Naive thymus-derived CD4-positive, alpha-beta T cell (primary cell): ENCODE measurements at regions of chr7 and their contacts with region 1.

Region 1: DNA sequence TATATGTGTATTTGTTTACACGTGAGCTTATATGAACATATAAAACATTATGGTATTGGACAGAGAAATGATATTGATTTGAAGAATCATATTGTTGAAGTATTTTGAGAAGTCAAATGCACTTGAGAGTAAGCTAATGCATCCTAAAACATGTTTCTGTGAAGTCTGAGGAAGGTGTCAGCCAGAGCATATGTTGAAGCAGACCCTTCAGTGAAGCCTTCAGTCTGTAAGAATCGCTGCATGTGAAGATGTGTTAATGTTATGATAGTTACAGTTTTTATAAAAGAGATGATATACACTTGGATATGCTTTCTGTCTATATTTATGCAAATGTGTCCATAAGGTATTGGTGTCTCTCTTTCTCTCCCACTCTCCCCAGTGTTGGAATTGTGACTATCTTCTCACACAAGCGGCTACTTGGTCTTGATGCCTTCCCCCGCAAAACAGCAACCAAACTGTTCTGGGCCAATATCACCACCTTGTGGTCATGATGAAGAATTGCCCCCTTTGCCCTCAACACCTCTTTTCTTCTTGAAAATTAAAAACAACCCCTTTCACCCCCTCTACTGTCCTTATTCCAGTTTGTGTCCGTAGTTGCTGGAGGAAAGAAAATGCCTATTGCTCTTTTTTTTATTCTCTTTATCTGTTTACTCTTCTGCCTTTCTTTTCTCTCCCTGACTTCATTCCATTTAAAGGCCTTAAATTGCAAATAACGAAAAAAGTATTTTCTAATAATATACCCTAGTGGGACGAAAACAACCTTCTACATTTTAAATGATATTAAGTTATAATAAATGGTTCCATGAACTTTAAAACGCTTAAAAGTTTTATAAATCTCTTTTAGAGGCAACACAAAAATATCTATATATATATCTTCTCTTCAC is 64.9 kb downstream of the IKZF1 start:
- DNase-seq: peak in 7 of 9 donors; percentile 72 to 86 (median 81)
- ATAC-seq: peak; percentile 84
- H3K4me3 ChIP-seq: peak overlapping the region; percentile 15
- H3K4me3 Mint-ChIP-seq: peak overlapping the region; percentile 8 to 89 (median 60)
- H3K27ac ChIP-seq: peak overlapping the region; percentile 94
- H3K27ac Mint-ChIP-seq: peak overlapping the region in 6 of 9 donors; percentile 80 to 100 (median 98)
- H3K4me1 ChIP-seq: peaks cover 84 to 96% of the 10 kb centered on the region in 2 donors
- H3K4me1 Mint-ChIP-seq: peaks cover 63 to 99% (median 96%) of the 10 kb centered on the region in 7 donors
- H3K27me3 ChIP-seq: no peaks in the 10 kb centered on the region
- H3K27me3 Mint-ChIP-seq: no peaks in the 10 kb centered on the region

Region 2: GRCh38 chr7:49980465-49980864 is 388.9 kb before region 1 on chr7:
- CTCF ChIA-PET with region 1: no interaction called
- POLR2A ChIA-PET with region 1: no interaction called
- intact Hi-C with region 1: no loop called
- DNase-seq: peak in 1 of 9 donors; percentile 4
- ATAC-seq: no peak
- H3K4me3 ChIP-seq: no peak overlapping the region
- H3K4me3 Mint-ChIP-seq: no peak overlapping the region
- H3K27ac ChIP-seq: no peak overlapping the region
- H3K27ac Mint-ChIP-seq: no peak overlapping the region
- H3K4me1 ChIP-seq: no peaks in the 10 kb centered on the region
- H3K4me1 Mint-ChIP-seq: no peaks in the 10 kb centered on the region
- H3K27me3 ChIP-seq: no peaks in the 10 kb centered on the region
- H3K27me3 Mint-ChIP-seq: peaks cover 0 to 11% (median 0%) of the 10 kb centered on the region in 5 donors

Region 3: DNA sequence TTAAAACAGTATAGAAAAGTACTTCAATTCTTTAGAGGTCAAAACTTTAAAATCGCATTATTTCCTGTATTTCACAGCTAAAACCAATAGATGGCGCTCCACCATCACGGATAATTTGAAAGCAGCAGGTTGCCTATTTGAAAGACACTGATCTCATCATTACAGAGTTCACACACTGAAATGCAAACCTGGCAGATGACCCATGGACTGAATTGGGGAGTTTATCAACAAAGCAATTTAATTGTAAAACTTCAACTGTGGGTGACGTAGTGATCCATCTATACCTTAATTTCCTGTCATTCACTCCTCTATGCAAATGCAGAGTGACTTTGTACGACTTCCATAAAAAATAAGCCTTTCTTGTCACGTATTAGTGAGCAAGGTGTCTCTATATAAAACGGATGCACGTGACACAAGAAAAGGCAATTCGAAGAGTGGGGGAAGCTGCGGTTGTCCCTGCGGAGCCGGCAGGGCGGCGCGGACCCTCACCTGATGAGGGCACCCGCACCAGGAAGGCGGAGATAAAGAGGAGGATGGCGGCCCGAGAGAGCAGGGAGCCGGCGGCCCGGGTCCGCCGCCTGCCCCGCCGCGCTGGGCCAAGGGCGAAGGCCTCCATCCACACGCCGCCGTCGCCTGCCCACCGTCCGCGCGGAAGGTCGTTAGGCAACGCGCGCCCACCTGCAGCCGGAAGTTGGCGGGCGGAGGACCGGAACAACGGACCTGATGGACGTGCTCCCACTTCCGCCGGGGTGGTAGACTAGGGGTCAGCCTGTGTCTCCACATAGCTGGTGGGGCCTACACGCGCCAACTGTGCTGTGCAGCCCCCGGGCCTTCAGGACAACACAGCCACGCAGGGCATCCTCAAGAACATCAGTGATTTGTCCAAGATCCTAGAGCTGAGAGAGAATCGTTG is 276.6 kb before region 1 on chr7 and contains the start of gene ZPBP:
- CTCF ChIA-PET with region 1: interaction called, 4 read pairs
- POLR2A ChIA-PET with region 1: interaction called, 3 read pairs
- intact Hi-C with region 1: loop called (anchors 2 kb)
- DNase-seq: peak in 8 of 9 donors; percentile 34 to 77 (median 70)
- ATAC-seq: peak; percentile 88
- H3K4me3 ChIP-seq: peak within 1 kb of the TSS; percentile 59
- H3K4me3 Mint-ChIP-seq: peak within 1 kb of the TSS; percentile 85 to 96 (median 89)
- H3K27ac ChIP-seq: peak within 1 kb of the TSS; percentile 62
- H3K27ac Mint-ChIP-seq: peak within 1 kb of the TSS; percentile 62 to 93 (median 88)
- H3K4me1 ChIP-seq: no peaks in the 10 kb centered on the region
- H3K4me1 Mint-ChIP-seq: peaks cover 8 to 22% (median 10%) of the 10 kb centered on the region in 7 donors
- H3K27me3 ChIP-seq: no peaks in the 10 kb centered on the region
- H3K27me3 Mint-ChIP-seq: peaks cover 0 to 27% (median 0%) of the 10 kb centered on the region in 5 donors
- total RNA-seq, gene ZPBP: not detected

Region 4: GRCh38 chr7:50212666-50213621 is 156.4 kb before region 1 on chr7:
- CTCF ChIA-PET with region 1: interaction called, 181 read pairs
- POLR2A ChIA-PET with region 1: interaction called, 325 read pairs
- intact Hi-C with region 1: no loop called
- DNase-seq: peak in 5 of 9 donors; percentile 24 to 49 (median 41)
- ATAC-seq: peak; percentile 63
- H3K4me3 ChIP-seq: no peak overlapping the region
- H3K4me3 Mint-ChIP-seq: peak overlapping the region; percentile 44 to 89 (median 68)
- H3K27ac ChIP-seq: no peak overlapping the region
- H3K27ac Mint-ChIP-seq: peak overlapping the region; percentile 26 to 94 (median 83)
- H3K4me1 ChIP-seq: peaks cover 17 to 86% of the 10 kb centered on the region in 2 donors
- H3K4me1 Mint-ChIP-seq: peaks cover 69 to 100% (median 98%) of the 10 kb centered on the region in 7 donors
- H3K27me3 ChIP-seq: no peaks in the 10 kb centered on the region
- H3K27me3 Mint-ChIP-seq: no peaks in the 10 kb centered on the region

Region 5: GRCh38 chr7:50317221-50317678 is 52.1 kb before region 1 on chr7:
- CTCF ChIA-PET with region 1: interaction called, 210 read pairs
- POLR2A ChIA-PET with region 1: interaction called, 2,368 read pairs
- intact Hi-C with region 1: loop called (anchors 1 to 2 kb)
- DNase-seq: peak in 7 of 9 donors; percentile 71 to 92 (median 89)
- ATAC-seq: peak; percentile 85
- H3K4me3 ChIP-seq: peak overlapping the region; percentile 73
- H3K4me3 Mint-ChIP-seq: peak overlapping the region; percentile 81 to 100 (median 94)
- H3K27ac ChIP-seq: peak overlapping the region; percentile 90
- H3K27ac Mint-ChIP-seq: peak overlapping the region in 6 of 9 donors; percentile 90 to 100 (median 99)
- H3K4me1 ChIP-seq: peaks cover 78 to 92% of the 10 kb centered on the region in 2 donors
- H3K4me1 Mint-ChIP-seq: peaks cover 0 to 100% (median 95%) of the 10 kb centered on the region in 7 donors
- H3K27me3 ChIP-seq: no peaks in the 10 kb centered on the region
- H3K27me3 Mint-ChIP-seq: no peaks in the 10 kb centered on the region

Region 6: DNA sequence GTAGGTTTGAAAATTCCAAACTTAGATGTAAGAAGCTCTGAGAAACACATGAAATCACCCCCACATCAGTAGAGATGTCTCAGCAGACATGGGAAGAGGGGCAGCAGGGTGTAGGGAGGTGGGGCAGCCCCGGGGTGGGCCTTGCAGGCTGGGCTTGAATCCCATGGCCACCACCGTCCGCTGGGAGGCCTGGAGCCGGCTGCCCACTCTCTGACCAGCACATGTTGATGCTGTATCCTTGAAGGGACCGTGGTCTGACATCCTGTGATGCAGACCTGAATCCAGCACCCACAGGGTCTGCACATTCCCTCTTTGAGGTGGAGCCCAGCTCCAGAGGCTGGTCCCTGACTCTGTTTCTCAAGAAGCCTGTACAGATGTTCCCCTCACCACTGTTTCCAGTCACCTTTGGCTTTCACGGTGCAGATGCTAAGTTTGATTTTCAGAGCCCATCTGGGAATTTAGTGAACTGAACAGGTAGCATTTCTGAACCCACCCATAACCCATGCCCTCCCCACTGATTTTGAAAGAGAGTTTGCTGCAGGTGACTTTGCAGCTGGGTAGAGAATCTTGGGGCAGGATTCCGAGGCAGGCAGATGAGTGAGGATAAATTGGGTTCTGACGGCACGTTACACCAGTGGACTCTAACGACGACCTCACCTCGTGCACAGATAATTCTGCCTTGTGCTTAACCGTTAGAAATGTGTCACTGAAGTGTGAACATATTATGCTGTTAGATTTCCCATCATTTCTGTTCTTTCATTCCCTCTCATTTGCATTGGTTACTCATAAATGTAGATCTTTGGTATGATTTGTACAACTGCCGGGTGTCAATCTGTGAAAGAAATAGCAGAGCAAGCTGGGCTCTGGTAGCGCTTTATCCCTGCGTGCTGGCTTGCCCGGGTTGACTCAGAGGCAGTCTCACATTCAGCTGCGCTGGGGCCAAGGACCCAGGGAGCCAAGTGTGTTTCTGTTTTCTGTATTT is 19.1 kb before region 1 on chr7:
- CTCF ChIA-PET with region 1: interaction called, 16 read pairs
- POLR2A ChIA-PET with region 1: interaction called, 1,292 read pairs
- intact Hi-C with region 1: loop called in 1 of 2 experiments (anchors 1 kb)
- DNase-seq: peak in 5 of 9 donors; percentile 55 to 77 (median 68)
- ATAC-seq: peak; percentile 51
- H3K4me3 ChIP-seq: peak overlapping the region; percentile 4
- H3K4me3 Mint-ChIP-seq: peak overlapping the region; percentile 71 to 95 (median 78)
- H3K27ac ChIP-seq: peak overlapping the region; percentile 93
- H3K27ac Mint-ChIP-seq: peak overlapping the region in 6 of 9 donors; percentile 91 to 100 (median 100)
- H3K4me1 ChIP-seq: peaks cover 96% of the 10 kb centered on the region in 2 donors
- H3K4me1 Mint-ChIP-seq: peaks cover 0 to 100% (median 97%) of the 10 kb centered on the region in 7 donors
- H3K27me3 ChIP-seq: no peaks in the 10 kb centered on the region
- H3K27me3 Mint-ChIP-seq: no peaks in the 10 kb centered on the region

Region 7: DNA sequence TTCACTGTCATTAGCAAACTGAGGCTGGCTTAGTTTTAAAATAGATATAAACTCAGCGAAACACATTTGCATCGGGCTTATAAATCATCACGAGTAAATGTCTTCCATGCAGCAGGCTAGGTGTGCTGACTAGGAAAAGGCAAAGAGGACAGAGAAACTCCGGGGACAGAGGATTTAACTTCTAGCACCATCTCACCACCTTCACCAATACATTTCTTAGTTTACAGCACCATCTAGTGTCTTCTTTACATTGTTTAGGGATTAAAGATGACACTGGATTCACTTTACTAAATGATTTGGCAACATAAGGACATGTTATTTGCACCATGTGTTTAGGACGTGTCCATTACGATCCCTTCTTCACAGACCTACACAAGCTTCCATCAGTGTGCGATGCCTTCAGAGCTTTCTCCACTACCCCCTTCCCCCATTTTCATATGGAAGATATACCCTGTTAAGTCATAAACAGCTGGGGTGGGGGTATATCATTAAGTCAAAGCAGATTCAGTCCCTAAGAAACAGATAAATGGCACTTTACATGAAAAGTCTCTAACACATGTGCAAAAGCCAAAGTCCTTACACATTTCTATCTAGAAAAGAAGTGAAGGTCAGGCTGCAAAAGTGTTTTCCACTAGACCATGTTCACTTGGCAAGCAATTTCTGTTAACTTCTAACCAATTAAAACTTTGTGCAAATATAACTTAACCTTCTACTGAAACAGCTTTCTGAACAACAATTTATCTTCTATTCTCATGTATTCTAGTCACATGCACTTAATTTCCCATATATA is 310.0 kb after region 1 on chr7:
- CTCF ChIA-PET with region 1: no interaction called
- POLR2A ChIA-PET with region 1: no interaction called
- intact Hi-C with region 1: loop called in 1 of 2 experiments (anchors 5 kb)
- DNase-seq: peak in 6 of 9 donors; percentile 27 to 59 (median 54)
- ATAC-seq: peak; percentile 73
- H3K4me3 ChIP-seq: no peak overlapping the region
- H3K4me3 Mint-ChIP-seq: no peak overlapping the region
- H3K27ac ChIP-seq: no peak overlapping the region
- H3K27ac Mint-ChIP-seq: no peak overlapping the region
- H3K4me1 ChIP-seq: no peaks in the 10 kb centered on the region
- H3K4me1 Mint-ChIP-seq: peaks cover 0 to 5% (median 0%) of the 10 kb centered on the region in 7 donors
- H3K27me3 ChIP-seq: no peaks in the 10 kb centered on the region
- H3K27me3 Mint-ChIP-seq: peaks cover 0 to 22% (median 0%) of the 10 kb centered on the region in 5 donors